Pancreas (tissue), 10 donors: ENCODE measurements at regions of chr1 and their contacts with region 1.

Region 1: GRCh38 chr1:154463512-154463990 is 38.5 kb upstream of the TDRD10 start:
- DNase-seq: peak in 1 of 6 donors; percentile 13
- ATAC-seq: peak in 2 of 4 donors; percentile 31 to 39
- H3K4me3 ChIP-seq: no peak overlapping the region
- H3K27ac ChIP-seq: no peak overlapping the region
- H3K4me1 ChIP-seq: no peaks in the 10 kb centered on the region
- H3K27me3 ChIP-seq: no peaks in the 10 kb centered on the region
- CTCF ChIP-seq: no peak

Region 2: GRCh38 chr1:154404984-154405761 is 58.4 kb before region 1 on chr1 and contains the start of gene IL6R:
- intact Hi-C with region 1: loop called in 1 of 3 experiments (anchors 10 kb)
- DNase-seq: peak; percentile 80 to 92 (median 88)
- ATAC-seq: peak; percentile 78 to 85 (median 82)
- H3K4me3 ChIP-seq: peak within 1 kb of the TSS; percentile 36 to 70 (median 56)
- H3K27ac ChIP-seq: peak within 1 kb of the TSS; percentile 76 to 94 (median 84)
- H3K4me1 ChIP-seq: peaks cover 0 to 9% (median 0%) of the 10 kb centered on the region in 3 donors
- H3K27me3 ChIP-seq: no peaks in the 10 kb centered on the region
- CTCF ChIP-seq: peak in 2 of 4 donors; percentile 20 to 26
- total RNA-seq, gene IL6R: 2.2 to 12.9 (median 7.1) TPM

Region 3: GRCh38 chr1:154607609-154608396 is 144.3 kb after region 1 on chr1 and contains the start of gene ADAR:
- intact Hi-C with region 1: no loop called
- DNase-seq: peak; percentile 83 to 94 (median 91)
- ATAC-seq: peak; percentile 94 to 96 (median 95)
- H3K4me3 ChIP-seq: peak within 1 kb of the TSS; percentile 72 to 97 (median 87)
- H3K27ac ChIP-seq: peak within 1 kb of the TSS; percentile 84 to 97 (median 88)
- H3K4me1 ChIP-seq: peaks cover 0 to 17% (median 2%) of the 10 kb centered on the region in 3 donors
- H3K27me3 ChIP-seq: no peaks in the 10 kb centered on the region
- CTCF ChIP-seq: no peak
- total RNA-seq, gene ADAR: 41.4 to 94.2 (median 49.7) TPM

Region 4: DNA sequence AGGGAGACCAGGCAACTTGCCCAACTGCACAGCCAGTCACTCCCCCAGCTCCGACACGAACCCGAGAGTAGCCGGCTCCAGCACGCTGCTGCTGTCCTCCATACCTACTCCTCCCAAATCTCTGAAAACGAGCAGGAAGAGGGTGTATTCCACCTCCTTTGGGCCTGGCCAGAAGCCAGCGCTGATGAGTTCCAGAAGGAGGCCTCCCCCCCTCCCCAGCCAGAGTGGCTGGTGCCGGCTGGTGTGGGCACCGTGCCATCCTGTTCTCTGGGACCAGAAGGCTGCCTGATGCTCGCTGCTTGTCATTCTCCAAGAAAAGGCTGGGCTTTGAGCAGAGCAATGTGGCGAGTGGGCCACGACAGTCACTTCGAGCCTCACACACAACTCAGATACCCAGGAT is 384.3 kb after region 1 on chr1:
- intact Hi-C with region 1: no loop called
- DNase-seq: peak in 2 of 6 donors; percentile 20 to 56
- ATAC-seq: no peak
- H3K4me3 ChIP-seq: no peak overlapping the region
- H3K27ac ChIP-seq: no peak overlapping the region
- H3K4me1 ChIP-seq: no peaks in the 10 kb centered on the region
- H3K27me3 ChIP-seq: no peaks in the 10 kb centered on the region
- CTCF ChIP-seq: no peak